OCI-LY7 (cell line): ENCODE measurements at regions of chr1 and their contacts with region 1.

Region 1: GRCh38 chr1:3796215-3797061 is at the start of gene LRRC47:
- DNase-seq: peak; percentile 94
- H3K4me3 ChIP-seq: peak within 1 kb of the TSS; percentile 99
- H3K27ac ChIP-seq: peak within 1 kb of the TSS; percentile 32
- H3K4me1 ChIP-seq: peaks cover 24% of the 10 kb centered on the region
- CTCF ChIP-seq: no peak
- total RNA-seq, gene LRRC47: 34.0 and 36.4 TPM in 2 replicates

Region 2: GRCh38 chr1:3772027-3772714 is 24.3 kb before region 1 on chr1:
- CTCF ChIA-PET with region 1: no interaction called
- POLR2A ChIA-PET with region 1: no interaction called
- intact Hi-C with region 1: loop called (anchors 1 kb)
- DNase-seq: peak; percentile 91
- H3K4me3 ChIP-seq: peak overlapping the region; percentile 72
- H3K27ac ChIP-seq: no peak overlapping the region
- H3K4me1 ChIP-seq: peaks cover 22% of the 10 kb centered on the region
- CTCF ChIP-seq: no peak